ENCODE measurements at regions of chr6 and their contacts with region 1.

Region 1: DNA sequence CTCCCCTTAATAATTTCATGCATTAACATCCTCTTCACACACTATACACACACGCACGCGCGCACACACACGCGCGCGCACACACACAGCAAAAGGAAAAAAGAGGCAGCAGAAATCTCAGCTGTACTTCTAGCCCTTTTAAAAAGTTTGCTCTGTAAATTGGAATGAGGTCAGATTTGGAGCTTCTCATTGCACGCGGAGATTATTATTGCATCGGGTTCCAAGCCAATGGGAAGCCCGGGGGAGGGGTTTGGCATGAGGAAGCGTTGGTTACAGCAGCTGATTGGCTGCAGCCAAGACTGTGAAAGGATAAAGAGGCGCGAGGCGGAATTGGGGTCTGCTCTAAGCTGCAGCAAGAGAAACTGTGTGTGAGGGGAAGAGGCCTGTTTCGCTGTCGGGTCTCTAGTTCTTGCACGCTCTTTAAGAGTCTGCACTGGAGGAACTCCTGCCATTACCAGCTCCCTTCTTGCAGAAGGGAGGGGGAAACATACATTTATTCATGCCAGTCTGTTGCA is at the start of gene SOX4:
- DNase-seq: peak in 13 of 14 experiments; percentile 15 to 83 (median 49)
- ATAC-seq: peak; percentile 74
- H3K4me3 ChIP-seq: peak within 1 kb of the TSS; percentile 62
- H3K4me3 Mint-ChIP-seq: peak within 1 kb of the TSS; percentile 91
- H3K27ac ChIP-seq: no peak within 1 kb of the TSS
- H3K27ac Mint-ChIP-seq: peak within 1 kb of the TSS; percentile 79
- H3K4me1 ChIP-seq: peaks cover 34% of the 10 kb centered on the region
- H3K4me1 Mint-ChIP-seq: peaks cover 34% of the 10 kb centered on the region
- H3K27me3 ChIP-seq: peaks cover 37 to 48% of the 10 kb centered on the region in 2 experiments
- H3K27me3 Mint-ChIP-seq: peaks cover 59% of the 10 kb centered on the region
- CTCF ChIP-seq: no peak
- total RNA-seq, gene SOX4: 22.1 to 22.6 TPM

Region 2: DNA sequence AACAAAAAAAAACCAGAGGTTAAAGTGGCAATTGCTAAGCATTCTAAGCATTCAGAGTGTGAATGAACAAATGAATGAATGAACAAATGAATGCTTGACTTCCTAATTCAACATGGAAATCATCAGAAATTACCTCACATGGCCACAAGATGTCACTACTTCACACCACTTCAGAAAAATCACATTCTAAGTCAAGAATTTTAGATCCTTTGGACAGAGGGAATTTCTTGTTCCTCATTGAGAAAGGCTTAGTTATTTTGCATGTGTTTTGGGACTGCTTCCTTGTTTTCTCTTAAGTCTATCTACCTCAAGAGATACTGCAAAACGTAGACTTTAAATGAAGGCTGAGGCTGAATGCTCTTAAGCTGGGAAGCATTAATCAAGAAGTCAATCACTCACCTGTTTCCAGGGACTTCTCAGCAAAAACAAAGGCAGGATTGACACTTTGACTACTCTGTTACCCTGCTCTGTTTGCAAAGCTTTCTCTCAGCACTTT is 1501.3 kb before region 1 on chr6:
- CTCF ChIA-PET with region 1: no interaction called
- POLR2A ChIA-PET with region 1: no interaction called
- intact Hi-C with region 1: loop called (anchors 2 to 5 kb)
- DNase-seq: peak in 4 of 14 experiments; percentile 10 to 57 (median 42)
- ATAC-seq: peak; percentile 32
- H3K4me3 ChIP-seq: no peak overlapping the region
- H3K4me3 Mint-ChIP-seq: no peak overlapping the region
- H3K27ac ChIP-seq: no peak overlapping the region
- H3K27ac Mint-ChIP-seq: no peak overlapping the region
- H3K4me1 ChIP-seq: no peaks in the 10 kb centered on the region
- H3K4me1 Mint-ChIP-seq: no peaks in the 10 kb centered on the region
- H3K27me3 ChIP-seq: no peaks in the 10 kb centered on the region
- H3K27me3 Mint-ChIP-seq: no peaks in the 10 kb centered on the region
- CTCF ChIP-seq: peak; percentile 79

Region 3: GRCh38 chr6:20564269-20564668 is 1029.2 kb before region 1 on chr6:
- CTCF ChIA-PET with region 1: interaction called, 10 read pairs
- POLR2A ChIA-PET with region 1: interaction called, 9 read pairs
- intact Hi-C with region 1: loop called (anchors 1 kb)
- DNase-seq: peak in 3 of 14 experiments; percentile 36 to 48 (median 36)
- ATAC-seq: no peak
- H3K4me3 ChIP-seq: no peak overlapping the region
- H3K4me3 Mint-ChIP-seq: no peak overlapping the region
- H3K27ac ChIP-seq: no peak overlapping the region
- H3K27ac Mint-ChIP-seq: no peak overlapping the region
- H3K4me1 ChIP-seq: no peaks in the 10 kb centered on the region
- H3K4me1 Mint-ChIP-seq: peaks cover 18% of the 10 kb centered on the region
- H3K27me3 ChIP-seq: no peaks in the 10 kb centered on the region
- H3K27me3 Mint-ChIP-seq: no peaks in the 10 kb centered on the region
- CTCF ChIP-seq: peak; percentile 70

Region 4: GRCh38 chr6:21900730-21901129 is 307.3 kb after region 1 on chr6:
- CTCF ChIA-PET with region 1: no interaction called
- POLR2A ChIA-PET with region 1: no interaction called
- intact Hi-C with region 1: no loop called
- DNase-seq: no peak
- ATAC-seq: no peak
- H3K4me3 ChIP-seq: no peak overlapping the region
- H3K4me3 Mint-ChIP-seq: no peak overlapping the region
- H3K27ac ChIP-seq: no peak overlapping the region
- H3K27ac Mint-ChIP-seq: no peak overlapping the region
- H3K4me1 ChIP-seq: no peaks in the 10 kb centered on the region
- H3K4me1 Mint-ChIP-seq: no peaks in the 10 kb centered on the region
- H3K27me3 ChIP-seq: no peaks in the 10 kb centered on the region
- H3K27me3 Mint-ChIP-seq: no peaks in the 10 kb centered on the region
- CTCF ChIP-seq: no peak

Region 5: GRCh38 chr6:21922086-21922485 is 328.6 kb after region 1 on chr6:
- CTCF ChIA-PET with region 1: no interaction called
- POLR2A ChIA-PET with region 1: no interaction called
- intact Hi-C with region 1: loop called in 1 of 2 experiments (anchors 10 kb)
- DNase-seq: no peak
- ATAC-seq: no peak
- H3K4me3 ChIP-seq: no peak overlapping the region
- H3K4me3 Mint-ChIP-seq: no peak overlapping the region
- H3K27ac ChIP-seq: no peak overlapping the region
- H3K27ac Mint-ChIP-seq: no peak overlapping the region
- H3K4me1 ChIP-seq: no peaks in the 10 kb centered on the region
- H3K4me1 Mint-ChIP-seq: peaks cover 14% of the 10 kb centered on the region
- H3K27me3 ChIP-seq: no peaks in the 10 kb centered on the region
- H3K27me3 Mint-ChIP-seq: no peaks in the 10 kb centered on the region
- CTCF ChIP-seq: no peak

Measured in CD4-positive, alpha-beta T cell (primary cell).